K562 (cell line): ENCODE measurements at regions of chr11 and their contacts with region 1.

Region 1: GRCh38 chr11:27497284-27497866 is 9.2 kb downstream of the LIN7C start:
- DNase-seq: peak in 3 of 4 experiments; percentile 20 to 30 (median 21)
- ATAC-seq: peak; percentile 73
- H3K4me3 ChIP-seq: no peak overlapping the region
- H3K27ac ChIP-seq: no peak overlapping the region
- H3K4me1 ChIP-seq: no peaks in the 10 kb centered on the region
- H3K27me3 ChIP-seq: no peaks in the 10 kb centered on the region
- CTCF ChIP-seq: peak in 2 of 3 experiments; percentile 20 to 60; a peak in 3 of 6 replicates
- EP300 ChIP-seq: no peak
- POLR2A ChIP-seq: no peak
- RAD21 ChIP-seq: peak; percentile 41 to 55

Region 2: GRCh38 chr11:26649884-26650283 is 847.5 kb before region 1 on chr11:
- CTCF ChIA-PET with region 1: no interaction called
- POLR2A ChIA-PET with region 1: no interaction called
- in situ Hi-C with region 1: no loop called
- intact Hi-C with region 1: loop called (anchors 5 kb)
- DNase-seq: peak; percentile 29 to 69 (median 35)
- ATAC-seq: peak; percentile 88
- H3K4me3 ChIP-seq: no peak overlapping the region
- H3K27ac ChIP-seq: no peak overlapping the region
- H3K4me1 ChIP-seq: no peaks in the 10 kb centered on the region
- H3K27me3 ChIP-seq: no peaks in the 10 kb centered on the region
- CTCF ChIP-seq: peak; percentile 24 to 60 (median 56); a peak in 5 of 6 replicates
- EP300 ChIP-seq: no peak
- POLR2A ChIP-seq: no peak
- RAD21 ChIP-seq: peak; percentile 65 to 71

Region 3: DNA sequence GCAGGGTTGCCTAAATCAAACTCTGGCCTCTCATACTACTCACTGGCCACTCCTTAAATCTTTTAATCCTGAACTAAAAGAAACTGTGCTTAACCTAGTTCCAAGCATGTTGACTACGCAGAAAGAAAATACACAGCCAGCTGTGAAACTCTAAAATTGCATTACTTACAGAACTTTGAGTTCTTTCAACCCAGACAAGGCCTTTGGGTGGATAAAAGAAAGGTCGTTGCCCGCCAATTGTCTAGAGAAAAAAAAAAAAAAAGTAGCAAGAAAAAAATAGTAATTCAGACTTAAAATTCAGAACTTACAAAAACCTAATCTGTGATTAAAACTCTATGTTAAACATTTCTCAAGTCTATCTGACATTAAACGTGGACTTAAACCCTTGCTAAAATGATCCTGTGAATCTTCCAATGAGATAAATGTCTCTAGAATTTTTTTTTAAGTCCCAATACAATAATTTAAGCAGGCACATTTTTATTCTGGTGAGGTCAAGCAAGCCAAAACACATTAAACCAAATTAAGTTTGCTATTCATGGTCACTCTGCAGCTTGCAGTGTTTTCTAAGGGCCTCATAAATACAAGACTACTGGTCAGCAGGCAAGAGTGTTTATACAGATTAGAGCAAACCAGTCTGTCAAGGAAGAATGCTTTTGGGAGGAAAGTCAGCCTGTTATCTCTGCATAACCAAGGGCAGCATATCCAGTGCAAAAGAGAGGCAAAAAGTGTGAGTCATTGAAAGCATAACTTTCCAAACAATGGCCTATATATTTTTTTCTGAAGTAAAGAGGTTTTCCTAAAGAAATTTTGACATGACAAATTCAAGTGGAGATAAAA is 104.9 kb before region 1 on chr11:
- CTCF ChIA-PET with region 1: no interaction called
- POLR2A ChIA-PET with region 1: no interaction called
- in situ Hi-C with region 1: no loop called
- intact Hi-C with region 1: no loop called
- DNase-seq: peak; percentile 28 to 89 (median 54)
- ATAC-seq: peak; percentile 89
- H3K4me3 ChIP-seq: no peak overlapping the region
- H3K27ac ChIP-seq: peak overlapping the region; percentile 40; the same call in 1 of the 3 replicates
- H3K4me1 ChIP-seq: peaks cover 5 to 51% of the 10 kb centered on the region in 2 experiments
- H3K27me3 ChIP-seq: no peaks in the 10 kb centered on the region
- CTCF ChIP-seq: no peak
- EP300 ChIP-seq: peak; percentile 90
- POLR2A ChIP-seq: no peak
- RAD21 ChIP-seq: no peak

Region 4: GRCh38 chr11:27720277-27720830 is 223.0 kb after region 1 on chr11:
- CTCF ChIA-PET with region 1: no interaction called
- POLR2A ChIA-PET with region 1: no interaction called
- in situ Hi-C with region 1: no loop called
- intact Hi-C with region 1: no loop called
- DNase-seq: peak; percentile 48 to 59 (median 53)
- ATAC-seq: peak; percentile 81
- H3K4me3 ChIP-seq: no peak overlapping the region
- H3K27ac ChIP-seq: no peak overlapping the region
- H3K4me1 ChIP-seq: peaks cover 0 to 3% of the 10 kb centered on the region in 2 experiments; a peak in 1 of 5 replicates
- H3K27me3 ChIP-seq: no peaks in the 10 kb centered on the region
- CTCF ChIP-seq: 0 out of 6 replicates have a peak, but pooled peaks of 1 of the 3 experiments have one; percentile 16
- EP300 ChIP-seq: no peak
- POLR2A ChIP-seq: no peak
- RAD21 ChIP-seq: no peak